BJ (cell line): ENCODE measurements at regions of chr5 and their contacts with region 1.

Region 1: DNA sequence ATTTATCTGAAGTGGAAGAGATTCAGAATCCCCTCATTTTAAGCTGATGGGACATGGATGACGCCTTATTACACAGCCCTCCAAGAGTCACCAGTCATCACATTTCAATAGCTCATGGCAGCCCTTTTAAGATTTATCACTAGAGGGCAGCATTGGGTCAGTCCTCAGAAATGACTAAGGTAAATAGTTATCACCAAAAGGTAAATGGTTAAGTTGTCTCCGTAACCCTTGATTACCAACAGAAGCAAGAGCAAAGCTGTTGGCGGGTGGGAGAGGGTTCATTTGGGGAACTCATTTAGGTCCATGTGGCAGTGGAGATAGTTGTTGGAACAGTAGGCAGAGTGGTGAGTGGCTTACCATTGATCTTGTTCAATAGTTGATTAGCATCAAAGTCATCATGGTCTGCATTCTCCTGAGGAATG is 12.0 kb upstream of the C9 start:
- DNase-seq: no peak
- H3K4me3 ChIP-seq: no peak overlapping the region
- H3K27me3 ChIP-seq: no peaks in the 10 kb centered on the region
- CTCF ChIP-seq: peak; percentile 66

Region 2: GRCh38 chr5:39283231-39283818 is 93.0 kb before region 1 on chr5:
- CTCF ChIA-PET with region 1: no interaction called
- POLR2A ChIA-PET with region 1: no interaction called
- DNase-seq: peak; percentile 4
- H3K4me3 ChIP-seq: no peak overlapping the region
- H3K27me3 ChIP-seq: no peaks in the 10 kb centered on the region
- CTCF ChIP-seq: peak; percentile 75

Region 3: GRCh38 chr5:39399135-39400036 is 23.1 kb after region 1 on chr5:
- CTCF ChIA-PET with region 1: interaction called, 27 read pairs
- POLR2A ChIA-PET with region 1: no interaction called
- DNase-seq: peak; percentile 96
- H3K4me3 ChIP-seq: no peak overlapping the region
- H3K27me3 ChIP-seq: no peaks in the 10 kb centered on the region
- CTCF ChIP-seq: no peak

Region 4: DNA sequence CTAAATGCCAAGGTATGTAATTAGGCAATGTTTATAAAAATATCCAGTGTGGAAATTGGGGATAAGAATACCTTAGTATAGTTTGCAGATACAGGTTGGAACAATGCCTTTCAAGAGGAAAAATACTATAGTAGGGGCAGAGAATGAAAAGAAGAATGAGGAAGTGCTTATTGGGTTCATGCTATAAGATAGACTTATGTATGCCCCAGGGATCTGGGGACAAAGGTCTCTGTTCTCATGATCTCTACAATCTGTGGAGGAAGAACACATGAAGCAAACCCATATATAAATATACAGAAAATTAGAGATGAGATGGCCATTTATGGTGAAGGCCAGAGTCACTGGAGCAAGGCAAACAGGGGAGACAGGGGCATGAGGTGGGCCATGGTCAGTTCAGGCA is 155.0 kb after region 1 on chr5:
- CTCF ChIA-PET with region 1: interaction called, 3 read pairs
- POLR2A ChIA-PET with region 1: interaction called, 16 read pairs
- DNase-seq: no peak
- H3K4me3 ChIP-seq: no peak overlapping the region
- H3K27me3 ChIP-seq: no peaks in the 10 kb centered on the region
- CTCF ChIP-seq: no peak

Region 5: GRCh38 chr5:39547553-39548154 is 171.3 kb after region 1 on chr5:
- CTCF ChIA-PET with region 1: interaction called, 64 read pairs
- POLR2A ChIA-PET with region 1: no interaction called
- DNase-seq: no peak
- H3K4me3 ChIP-seq: no peak overlapping the region
- H3K27me3 ChIP-seq: no peaks in the 10 kb centered on the region
- CTCF ChIP-seq: peak; percentile 67

Region 6: DNA sequence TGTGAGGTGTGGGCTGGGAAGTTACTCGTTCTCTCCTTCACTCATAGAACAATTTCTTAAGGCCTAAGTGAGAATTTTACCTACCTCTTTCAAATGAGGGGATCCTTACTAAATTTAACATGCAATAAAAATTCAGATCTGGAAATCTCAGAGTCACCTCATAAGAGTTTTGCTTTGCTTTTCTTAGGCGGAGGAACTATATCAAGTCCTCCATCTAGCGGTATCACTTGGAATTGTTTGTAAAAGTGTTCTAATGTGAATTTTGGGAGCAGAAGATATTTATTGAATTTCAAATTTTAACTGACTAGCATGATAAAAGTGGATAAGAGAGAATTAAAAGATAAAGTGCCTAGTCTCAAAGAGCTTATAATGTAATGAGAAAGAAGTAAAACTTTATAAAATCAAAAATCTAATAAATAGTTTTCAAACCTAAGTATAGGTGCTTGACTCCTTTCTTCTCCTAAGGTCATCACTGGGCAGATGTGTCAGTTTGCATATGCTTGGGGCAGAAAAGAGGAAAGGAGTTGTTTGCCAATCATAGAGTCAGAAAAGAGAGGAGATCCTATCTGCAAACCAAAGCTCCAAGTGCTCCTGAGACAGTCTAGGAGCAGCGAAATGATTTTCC is 194.2 kb after region 1 on chr5:
- CTCF ChIA-PET with region 1: interaction called, 11 read pairs
- POLR2A ChIA-PET with region 1: no interaction called
- DNase-seq: no peak
- H3K4me3 ChIP-seq: no peak overlapping the region
- H3K27me3 ChIP-seq: peaks cover 6% of the 10 kb centered on the region
- CTCF ChIP-seq: peak; percentile 63